ENCODE measurements at regions of chr6 and their contacts with region 1.

Region 1: DNA sequence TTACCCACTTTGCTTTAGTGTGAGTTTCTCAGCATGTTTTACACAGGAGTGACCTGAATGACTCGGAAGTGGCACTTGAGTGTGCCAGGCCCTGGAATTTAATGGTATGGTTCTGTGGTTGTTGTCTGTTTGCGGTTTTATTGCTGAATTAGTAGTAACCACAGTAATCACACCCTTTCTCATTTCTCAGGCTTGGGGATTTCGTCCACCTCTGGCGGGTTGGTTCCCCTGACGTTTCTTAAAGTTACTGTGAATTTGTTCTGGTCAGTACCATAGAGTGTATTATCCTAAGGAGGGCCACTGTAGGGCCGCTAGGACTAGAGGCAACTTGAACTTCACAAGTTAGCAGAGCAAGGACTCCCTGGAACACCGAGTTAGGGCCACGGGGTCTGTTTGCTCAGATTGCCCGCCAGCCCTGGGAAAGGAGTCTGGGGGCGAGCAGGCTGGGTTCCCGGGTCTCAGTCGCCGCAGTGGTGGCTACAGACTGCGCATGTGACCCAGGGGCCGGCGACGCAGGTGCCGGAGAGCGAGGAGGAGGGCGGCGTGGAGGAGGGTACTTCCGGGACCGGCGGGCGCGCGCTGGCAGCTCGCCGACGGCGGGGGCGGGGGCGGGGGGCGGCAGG is 546 bp upstream of the KLHL32 start:
- DNase-seq: no peak
- ATAC-seq: peak; percentile 16
- H3K4me3 Mint-ChIP-seq: peak overlapping the region; percentile 96
- H3K27ac Mint-ChIP-seq: peak overlapping the region; percentile 86
- H3K4me1 Mint-ChIP-seq: peaks cover 38% of the 10 kb centered on the region
- H3K27me3 Mint-ChIP-seq: no peaks in the 10 kb centered on the region

Region 2: DNA sequence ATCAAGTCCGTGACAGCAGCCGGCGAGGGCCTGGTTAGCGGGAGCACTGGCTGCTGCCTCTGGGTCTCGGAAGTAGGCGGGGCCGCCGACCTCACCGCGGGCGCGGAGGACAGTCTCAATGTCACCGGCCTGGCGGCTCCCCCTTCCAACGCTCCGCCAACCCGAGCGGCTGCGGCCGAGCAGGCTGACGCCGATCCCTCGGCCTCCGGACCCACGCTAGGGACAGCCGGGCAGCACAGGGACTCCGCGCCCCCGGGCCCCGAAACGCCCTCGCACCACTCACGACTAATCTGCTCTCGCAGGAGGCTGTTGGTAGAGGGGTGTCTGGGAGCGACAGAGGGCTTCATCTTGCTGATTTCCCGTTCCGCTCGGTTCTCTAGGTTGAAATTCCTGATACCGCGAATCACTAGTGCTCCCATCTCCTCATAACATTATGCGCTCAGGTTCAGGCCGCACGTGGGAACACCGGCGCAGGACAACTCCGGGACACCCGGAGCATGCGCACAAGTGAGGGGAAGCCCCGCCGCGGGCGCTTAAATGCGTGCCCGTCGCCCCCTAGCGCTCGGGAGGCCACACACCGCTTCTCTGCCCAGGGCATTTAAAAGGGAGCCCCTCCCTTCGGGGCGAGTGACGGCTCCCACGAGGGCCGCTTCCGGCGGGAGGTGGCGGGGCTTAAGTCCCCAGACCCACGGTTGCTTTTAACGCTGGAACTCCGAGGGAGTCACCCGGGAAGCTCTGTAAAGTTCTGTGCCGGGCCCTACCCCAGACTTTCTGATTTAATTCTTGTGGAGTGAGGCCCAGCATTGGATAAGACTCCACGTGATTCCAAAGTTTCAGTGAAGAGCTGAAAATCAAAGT is 26.4 kb before region 1 on chr6 and contains the start of gene NDUFAF4:
- CTCF ChIA-PET with region 1: interaction called, 19 read pairs
- DNase-seq: peak; percentile 96
- ATAC-seq: peak; percentile 93
- H3K4me3 Mint-ChIP-seq: peak within 1 kb of the TSS; percentile 81
- H3K27ac Mint-ChIP-seq: peak within 1 kb of the TSS; percentile 90
- H3K4me1 Mint-ChIP-seq: peaks cover 26% of the 10 kb centered on the region
- H3K27me3 Mint-ChIP-seq: peaks cover 2% of the 10 kb centered on the region
- total RNA-seq, gene NDUFAF4: 27.3 to 48.5 TPM

Region 3: DNA sequence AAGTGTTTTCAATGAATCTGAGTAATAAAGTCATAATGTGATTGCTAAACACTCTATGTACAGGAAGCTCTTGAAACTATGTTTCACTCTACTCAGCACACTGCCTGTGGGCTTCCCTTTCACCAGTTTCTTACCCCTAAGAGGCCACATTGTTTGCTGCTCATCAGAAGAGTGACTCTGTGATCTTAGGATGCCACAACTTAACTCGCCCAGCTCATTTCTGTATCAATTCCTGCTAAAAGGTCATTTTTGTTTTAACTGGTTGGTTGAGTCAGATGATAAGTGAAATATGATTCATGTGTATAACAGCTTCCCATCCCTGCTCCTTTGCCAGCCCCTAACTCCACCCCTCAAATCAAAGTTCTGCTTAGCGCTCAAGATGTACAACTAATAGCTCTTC is 16.5 kb before region 1 on chr6:
- CTCF ChIA-PET with region 1: interaction called, 14 read pairs
- DNase-seq: peak; percentile 70
- ATAC-seq: peak; percentile 95
- H3K4me3 Mint-ChIP-seq: no peak overlapping the region
- H3K27ac Mint-ChIP-seq: peak overlapping the region; percentile 62
- H3K4me1 Mint-ChIP-seq: peaks cover 24% of the 10 kb centered on the region
- H3K27me3 Mint-ChIP-seq: peaks cover 10% of the 10 kb centered on the region

Measured in activated CD8-positive, alpha-beta memory T cell treated with anti-CD3 and anti-CD28 coated beads, Interleukin-2, amount 10 ng/mL, durations not matched to agents 7 days and 5 days (primary cell).